Activated CD4-positive, alpha-beta T cell treated with anti-CD3 and anti-CD28 coated beads, Interleukin-2, amount 10 ng/mL, durations not matched to agents 7 days and 5 days (primary cell): ENCODE measurements at regions of chr1 and their contacts with region 1.

Region 1: DNA sequence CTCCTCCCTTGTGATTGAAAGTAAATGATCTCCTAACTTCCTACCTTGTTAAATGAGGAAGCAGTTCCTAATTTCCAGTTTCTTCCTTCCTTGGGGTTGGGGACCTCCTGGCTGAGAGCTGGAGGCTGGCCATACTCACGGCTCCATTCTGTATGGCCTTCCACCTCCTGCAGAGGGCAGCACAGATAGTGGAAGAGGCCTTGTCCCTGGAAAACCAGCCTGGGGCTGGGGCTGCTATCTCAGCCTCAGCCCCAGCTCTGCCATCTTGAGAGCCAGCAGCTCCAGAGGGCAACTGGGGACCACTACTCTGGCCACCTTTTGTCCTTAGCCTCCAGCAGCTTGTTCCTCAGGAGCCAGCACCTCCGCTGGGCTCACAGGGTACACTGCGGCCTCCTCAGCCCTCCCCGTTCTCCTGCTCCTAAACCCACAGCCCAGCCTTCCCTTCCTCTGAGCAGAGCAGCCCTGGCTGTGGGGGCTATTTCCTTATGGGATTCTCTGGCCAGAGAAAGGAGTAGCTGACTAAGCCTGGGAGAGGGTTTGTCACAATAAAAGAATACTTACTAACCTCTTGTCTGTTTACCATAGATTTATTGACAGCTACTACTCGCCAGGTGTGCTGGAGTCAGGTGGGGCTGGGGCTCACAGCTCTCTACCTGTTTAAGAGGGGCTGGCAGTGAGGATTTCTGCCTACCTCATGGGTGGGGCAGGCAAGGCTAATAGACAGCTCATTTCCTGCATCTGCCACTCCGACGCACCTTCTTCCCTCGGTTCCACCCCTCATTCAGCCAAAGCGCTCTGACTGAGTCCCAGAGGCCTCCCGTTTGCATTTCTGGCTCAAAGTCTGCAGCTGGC is 6.3 kb downstream of the TMEM234 start:
- DNase-seq: peak; percentile 74
- H3K4me3 Mint-ChIP-seq: no peak overlapping the region
- H3K27ac Mint-ChIP-seq: peak overlapping the region; percentile 80
- H3K4me1 Mint-ChIP-seq: peaks cover 26% of the 10 kb centered on the region
- H3K27me3 Mint-ChIP-seq: no peaks in the 10 kb centered on the region

Region 2: GRCh38 chr1:32200226-32201010 is 15.4 kb before region 1 on chr1 and contains the start of gene CCDC28B:
- CTCF ChIA-PET with region 1: interaction called, 19 read pairs
- POLR2A ChIA-PET with region 1: interaction called, 3 read pairs
- DNase-seq: peak; percentile 69
- H3K4me3 Mint-ChIP-seq: peak within 1 kb of the TSS; percentile 81
- H3K27ac Mint-ChIP-seq: peak within 1 kb of the TSS; percentile 88
- H3K4me1 Mint-ChIP-seq: peaks cover 76% of the 10 kb centered on the region
- H3K27me3 Mint-ChIP-seq: no peaks in the 10 kb centered on the region
- total RNA-seq, gene CCDC28B: 33.4 to 36.6 TPM

Region 3: DNA sequence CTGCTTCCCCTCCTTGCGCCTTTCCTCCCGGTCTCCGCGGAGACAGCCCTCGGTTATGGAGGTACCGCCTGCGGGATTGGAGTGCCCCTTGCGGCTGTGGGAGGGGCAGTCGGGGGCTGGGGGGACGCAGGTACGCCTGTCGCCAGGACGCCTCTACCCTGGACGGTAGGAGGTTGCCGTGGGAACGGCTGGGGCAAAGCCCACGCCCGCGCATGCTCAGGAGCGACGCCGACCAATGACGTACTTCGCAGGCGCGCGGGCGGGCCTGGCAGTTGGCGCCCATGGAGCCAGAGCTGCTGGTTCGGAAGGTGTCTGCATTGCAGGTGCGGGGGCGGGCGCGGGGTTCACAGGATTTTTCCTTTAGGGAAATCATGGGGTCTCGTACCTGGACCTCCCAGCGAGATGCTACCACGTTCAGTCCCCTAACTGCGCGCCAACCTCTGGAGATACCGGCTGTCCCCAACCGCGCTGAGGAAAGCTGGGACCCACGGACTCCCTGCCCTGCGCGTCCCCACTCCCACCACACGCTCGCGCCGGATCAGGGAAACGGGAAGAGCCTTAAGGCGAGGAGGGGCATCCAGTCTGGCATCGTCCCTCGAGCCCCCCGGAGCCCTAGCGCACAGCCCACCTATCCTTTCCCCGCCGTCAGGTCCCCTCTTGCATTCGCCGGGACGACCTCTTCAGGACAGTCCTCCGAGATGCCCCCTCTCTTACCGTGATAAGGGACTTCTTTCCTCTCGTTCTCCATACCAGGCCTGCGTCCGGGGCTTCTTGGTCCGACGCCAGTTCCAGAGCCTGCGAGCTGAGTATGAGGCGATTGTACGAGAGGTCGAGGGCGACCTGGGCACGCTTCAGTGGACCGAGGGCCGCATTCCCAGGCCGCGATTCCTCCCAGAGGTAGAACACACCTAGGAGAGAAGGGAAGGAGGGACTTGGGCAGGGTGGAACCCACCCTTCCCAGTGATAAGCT is 10.2 kb before region 1 on chr1 and contains the start of gene IQCC:
- CTCF ChIA-PET with region 1: interaction called, 19 read pairs
- POLR2A ChIA-PET with region 1: no interaction called
- DNase-seq: peak; percentile 89
- H3K4me3 Mint-ChIP-seq: peak within 1 kb of the TSS; percentile 88
- H3K27ac Mint-ChIP-seq: peak within 1 kb of the TSS; percentile 89
- H3K4me1 Mint-ChIP-seq: peaks cover 43% of the 10 kb centered on the region
- H3K27me3 Mint-ChIP-seq: no peaks in the 10 kb centered on the region
- total RNA-seq, gene IQCC: 4.8 to 5.0 TPM

Region 4: GRCh38 chr1:32240140-32240951 is 24.5 kb after region 1 on chr1:
- CTCF ChIA-PET with region 1: interaction called, 11 read pairs
- POLR2A ChIA-PET with region 1: no interaction called
- DNase-seq: peak; percentile 53
- H3K4me3 Mint-ChIP-seq: peak overlapping the region; percentile 78
- H3K27ac Mint-ChIP-seq: peak overlapping the region; percentile 57
- H3K4me1 Mint-ChIP-seq: peaks cover 35% of the 10 kb centered on the region
- H3K27me3 Mint-ChIP-seq: no peaks in the 10 kb centered on the region

Region 5: GRCh38 chr1:32247983-32248889 is 32.4 kb after region 1 on chr1:
- CTCF ChIA-PET with region 1: interaction called, 19 read pairs
- POLR2A ChIA-PET with region 1: interaction called, 5 read pairs
- DNase-seq: peak; percentile 78
- H3K4me3 Mint-ChIP-seq: peak overlapping the region; percentile 59
- H3K27ac Mint-ChIP-seq: peak overlapping the region; percentile 96
- H3K4me1 Mint-ChIP-seq: peaks cover 47% of the 10 kb centered on the region
- H3K27me3 Mint-ChIP-seq: no peaks in the 10 kb centered on the region

Region 6: GRCh38 chr1:32372149-32372756 is 156.4 kb after region 1 on chr1:
- CTCF ChIA-PET with region 1: interaction called, 11 read pairs
- POLR2A ChIA-PET with region 1: no interaction called
- DNase-seq: peak; percentile 69
- H3K4me3 Mint-ChIP-seq: no peak overlapping the region
- H3K27ac Mint-ChIP-seq: peak overlapping the region; percentile 67
- H3K4me1 Mint-ChIP-seq: peaks cover 20% of the 10 kb centered on the region
- H3K27me3 Mint-ChIP-seq: no peaks in the 10 kb centered on the region

Region 7: DNA sequence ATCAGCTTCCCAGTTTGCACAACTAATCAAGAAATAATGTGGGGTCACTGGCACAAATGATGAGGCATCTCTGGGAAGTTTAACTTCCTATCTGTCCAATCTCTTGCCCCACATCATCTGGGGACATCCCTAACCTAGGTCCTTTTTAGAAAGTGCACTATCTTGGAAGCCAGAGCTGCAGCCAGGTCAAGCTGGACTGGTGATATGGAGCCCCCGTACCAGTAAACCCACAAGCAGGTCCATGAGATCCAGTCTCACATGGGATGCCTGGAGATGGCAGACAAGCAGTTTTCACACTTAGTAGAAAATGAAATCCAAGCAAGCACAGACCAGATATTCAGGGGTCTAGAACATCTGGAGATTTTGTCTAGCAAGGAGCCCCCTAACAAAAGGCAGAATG is 205.9 kb after region 1 on chr1:
- CTCF ChIA-PET with region 1: interaction called, 12 read pairs
- POLR2A ChIA-PET with region 1: no interaction called
- DNase-seq: no peak
- H3K4me3 Mint-ChIP-seq: no peak overlapping the region
- H3K27ac Mint-ChIP-seq: no peak overlapping the region
- H3K4me1 Mint-ChIP-seq: no peaks in the 10 kb centered on the region
- H3K27me3 Mint-ChIP-seq: peaks cover 20% of the 10 kb centered on the region

Region 8: GRCh38 chr1:32549616-32550015 is 333.8 kb after region 1 on chr1:
- CTCF ChIA-PET with region 1: no interaction called
- POLR2A ChIA-PET with region 1: no interaction called
- DNase-seq: no peak
- H3K4me3 Mint-ChIP-seq: no peak overlapping the region
- H3K27ac Mint-ChIP-seq: no peak overlapping the region
- H3K4me1 Mint-ChIP-seq: no peaks in the 10 kb centered on the region
- H3K27me3 Mint-ChIP-seq: peaks cover 9% of the 10 kb centered on the region